ENCODE measurements at regions of chr19 and their contacts with region 1.

Region 1: GRCh38 chr19:10565567-10566407 is at the start of gene KRI1:
- DNase-seq: peak; percentile 98 to 99 (median 99)
- H3K4me3 ChIP-seq: peak within 1 kb of the TSS; percentile 96
- H3K4me3 Mint-ChIP-seq: peak within 1 kb of the TSS; percentile 86 to 99 (median 97)
- H3K27ac ChIP-seq: peak within 1 kb of the TSS; percentile 82
- H3K27ac Mint-ChIP-seq: peak within 1 kb of the TSS; percentile 97 to 100 (median 98)
- H3K4me1 ChIP-seq: peaks cover 36% of the 10 kb centered on the region
- H3K4me1 Mint-ChIP-seq: peaks cover 37 to 56% (median 41%) of the 10 kb centered on the region in 3 donors
- H3K27me3 ChIP-seq: no peaks in the 10 kb centered on the region
- H3K27me3 Mint-ChIP-seq: peaks cover 0 to 7% of the 10 kb centered on the region in 2 donors
- total RNA-seq, gene KRI1: 61.6 to 64.5 TPM

Region 2: DNA sequence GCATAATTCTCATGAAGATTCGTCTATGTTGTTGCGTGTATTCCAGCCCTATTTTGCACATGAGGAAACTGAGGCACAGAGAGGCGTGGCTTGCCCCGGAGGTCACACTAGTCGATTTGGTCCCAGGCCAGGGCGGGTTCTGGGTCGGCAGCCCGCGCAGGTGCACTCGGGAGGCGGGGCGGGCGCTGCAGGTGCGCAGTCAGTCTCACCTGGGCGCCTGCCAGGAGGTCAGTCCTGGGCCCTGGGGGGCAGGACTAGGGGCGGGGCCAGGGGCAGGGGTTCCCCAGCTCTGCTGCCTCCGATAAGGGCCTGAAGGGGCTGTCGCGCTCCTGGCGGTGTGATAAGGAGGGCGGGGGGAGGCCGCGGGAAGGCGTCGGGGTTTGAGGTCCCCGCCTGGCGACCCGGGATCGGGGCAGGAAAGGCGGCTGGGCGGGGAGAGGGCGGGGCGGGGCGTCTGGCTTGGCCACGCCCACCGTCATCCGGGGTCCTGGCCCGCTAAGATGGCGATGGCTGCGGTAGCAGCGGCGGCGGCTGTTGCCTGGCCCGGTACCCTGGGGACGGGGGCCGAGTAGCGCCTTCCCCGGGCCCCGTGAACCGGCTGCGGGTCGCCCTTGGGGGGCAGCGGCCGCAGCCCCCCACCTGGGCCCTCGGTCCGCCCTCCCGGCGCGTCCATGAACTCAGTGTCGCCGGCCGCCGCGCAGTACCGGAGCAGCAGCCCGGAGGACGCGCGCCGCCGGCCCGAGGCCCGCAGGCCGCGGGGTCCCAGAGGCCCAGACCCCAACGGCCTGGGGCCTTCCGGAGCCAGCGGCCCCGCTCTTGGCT is 22.2 kb before region 1 on chr19 and contains the start of gene ATG4D:
- CTCF ChIA-PET with region 1: interaction called, 56 read pairs
- POLR2A ChIA-PET with region 1: interaction called, 9 read pairs
- DNase-seq: peak; percentile 78 to 88 (median 81)
- H3K4me3 ChIP-seq: peak within 1 kb of the TSS; percentile 61
- H3K4me3 Mint-ChIP-seq: peak within 1 kb of the TSS; percentile 90 to 96 (median 93)
- H3K27ac ChIP-seq: peak within 1 kb of the TSS; percentile 79
- H3K27ac Mint-ChIP-seq: peak within 1 kb of the TSS; percentile 86 to 97 (median 93)
- H3K4me1 ChIP-seq: peaks cover 17% of the 10 kb centered on the region
- H3K4me1 Mint-ChIP-seq: peaks cover 11 to 27% (median 14%) of the 10 kb centered on the region in 3 donors
- H3K27me3 ChIP-seq: no peaks in the 10 kb centered on the region
- H3K27me3 Mint-ChIP-seq: peaks cover 2 to 8% of the 10 kb centered on the region in 2 donors
- total RNA-seq, gene ATG4D: 44.4 to 45.1 TPM

Region 3: GRCh38 chr19:10551698-10552301 is 14.0 kb before region 1 on chr19:
- CTCF ChIA-PET with region 1: interaction called, 63 read pairs
- POLR2A ChIA-PET with region 1: interaction called, 27 read pairs
- DNase-seq: peak in 3 of 5 donors; percentile 33 to 62 (median 48)
- H3K4me3 ChIP-seq: no peak overlapping the region
- H3K4me3 Mint-ChIP-seq: peak overlapping the region in 1 of 7 donors; percentile 61
- H3K27ac ChIP-seq: no peak overlapping the region
- H3K27ac Mint-ChIP-seq: peak overlapping the region; percentile 56 to 98 (median 78)
- H3K4me1 ChIP-seq: peaks cover 56% of the 10 kb centered on the region
- H3K4me1 Mint-ChIP-seq: peaks cover 43 to 65% (median 53%) of the 10 kb centered on the region in 3 donors
- H3K27me3 ChIP-seq: no peaks in the 10 kb centered on the region
- H3K27me3 Mint-ChIP-seq: no peaks in the 10 kb centered on the region

Region 4: GRCh38 chr19:10587022-10587789 is 21.4 kb after region 1 on chr19 and contains the start of gene AP1M2:
- CTCF ChIA-PET with region 1: no interaction called
- POLR2A ChIA-PET with region 1: no interaction called
- DNase-seq: no peak
- H3K4me3 ChIP-seq: no peak within 1 kb of the TSS
- H3K4me3 Mint-ChIP-seq: peak within 1 kb of the TSS in 1 of 7 donors; percentile 13
- H3K27ac ChIP-seq: no peak within 1 kb of the TSS
- H3K27ac Mint-ChIP-seq: peak within 1 kb of the TSS in 2 of 8 donors; percentile 2 to 83
- H3K4me1 ChIP-seq: no peaks in the 10 kb centered on the region
- H3K4me1 Mint-ChIP-seq: peaks cover 14 to 23% (median 20%) of the 10 kb centered on the region in 3 donors
- H3K27me3 ChIP-seq: no peaks in the 10 kb centered on the region
- H3K27me3 Mint-ChIP-seq: peaks cover 7 to 8% of the 10 kb centered on the region in 2 donors
- total RNA-seq, gene AP1M2: not detected

Measured in CD8-positive, alpha-beta memory T cell (primary cell).